Heart right ventricle (tissue), 16 donors: ENCODE measurements at regions of chr9 and their contacts with region 1.

Region 1: GRCh38 chr9:108412755-108413154 is 443.0 kb downstream of the ACTL7B start:
- DNase-seq: no peak
- ATAC-seq: no peak
- H3K4me3 ChIP-seq: no peak overlapping the region
- H3K27ac ChIP-seq: no peak overlapping the region
- H3K4me1 ChIP-seq: peaks cover 0 to 11% (median 0%) of the 10 kb centered on the region in 9 donors
- H3K27me3 ChIP-seq: no peaks in the 10 kb centered on the region
- CTCF ChIP-seq: peak in 1 of 9 donors; percentile 7

Region 2: GRCh38 chr9:108356806-108357205 is 55.9 kb before region 1 on chr9:
- intact Hi-C with region 1: loop called in 1 of 10 experiments (anchors 10 kb)
- DNase-seq: no peak
- ATAC-seq: no peak
- H3K4me3 ChIP-seq: no peak overlapping the region
- H3K27ac ChIP-seq: no peak overlapping the region
- H3K4me1 ChIP-seq: no peaks in the 10 kb centered on the region
- H3K27me3 ChIP-seq: no peaks in the 10 kb centered on the region
- CTCF ChIP-seq: no peak